Spleen (tissue), 13 donors: ENCODE measurements at regions of chr6 and their contacts with region 1.

Region 1: GRCh38 chr6:137641474-137642077 is 147.4 kb upstream of the OLIG3 start:
- DNase-seq: no peak
- H3K4me3 ChIP-seq: no peak overlapping the region
- H3K27ac ChIP-seq: no peak overlapping the region
- H3K4me1 ChIP-seq: peaks cover 0 to 14% (median 5%) of the 10 kb centered on the region in 6 donors
- H3K27me3 ChIP-seq: no peaks in the 10 kb centered on the region
- CTCF ChIP-seq: peak; percentile 24 to 78 (median 67)
- POLR2A ChIP-seq: no peak

Region 2: GRCh38 chr6:136969925-136970595 is 671.5 kb before region 1 on chr6:
- intact Hi-C with region 1: loop called (anchors 10 kb)
- DNase-seq: no peak
- H3K4me3 ChIP-seq: no peak overlapping the region
- H3K27ac ChIP-seq: no peak overlapping the region
- H3K4me1 ChIP-seq: peaks cover 0 to 8% (median 6%) of the 10 kb centered on the region in 6 donors
- H3K27me3 ChIP-seq: peaks cover 0 to 34% (median 0%) of the 10 kb centered on the region in 7 donors
- CTCF ChIP-seq: no peak
- POLR2A ChIP-seq: no peak

Region 3: DNA sequence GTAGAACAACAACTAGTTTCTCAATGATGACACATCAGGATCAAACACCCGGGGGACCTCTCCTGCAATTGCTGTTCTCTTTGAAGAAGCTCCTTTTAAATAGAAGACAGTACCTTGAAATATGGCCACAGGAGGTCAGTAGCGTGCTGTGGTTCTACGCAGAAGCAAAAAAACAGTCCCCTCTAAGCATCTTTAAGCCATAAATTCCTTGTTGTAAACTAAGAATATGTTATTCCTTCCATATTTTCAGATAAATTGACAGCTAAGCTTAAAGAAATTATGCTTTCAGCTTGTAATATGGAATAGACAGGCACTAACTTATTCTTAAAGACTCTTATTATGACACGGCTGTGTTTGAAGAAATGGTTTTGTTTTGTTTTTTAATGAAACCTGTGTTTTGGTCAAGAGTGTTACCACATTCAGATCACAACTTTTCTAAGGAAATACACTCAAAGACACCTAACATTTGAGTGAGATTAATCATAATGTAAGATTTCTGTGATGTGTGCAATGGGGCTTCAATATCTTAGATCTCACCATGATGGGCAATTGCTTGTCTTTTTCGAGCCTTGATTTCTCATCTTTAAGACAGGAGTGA is 547.1 kb before region 1 on chr6:
- intact Hi-C with region 1: loop called (anchors 5 kb)
- DNase-seq: no peak
- H3K4me3 ChIP-seq: peak overlapping the region in 1 of 8 donors; percentile 21
- H3K27ac ChIP-seq: peak overlapping the region in 4 of 8 donors; percentile 2 to 61 (median 38)
- H3K4me1 ChIP-seq: peaks cover 0 to 61% (median 21%) of the 10 kb centered on the region in 6 donors
- H3K27me3 ChIP-seq: no peaks in the 10 kb centered on the region
- CTCF ChIP-seq: peak; percentile 17 to 77 (median 68)
- POLR2A ChIP-seq: no peak

Region 4: GRCh38 chr6:137271245-137272183 is 370.1 kb before region 1 on chr6:
- intact Hi-C with region 1: loop called (anchors 5 kb)
- DNase-seq: no peak
- H3K4me3 ChIP-seq: no peak overlapping the region
- H3K27ac ChIP-seq: peak overlapping the region in 2 of 8 donors; percentile 14 to 27
- H3K4me1 ChIP-seq: peaks cover 0 to 27% (median 13%) of the 10 kb centered on the region in 6 donors
- H3K27me3 ChIP-seq: no peaks in the 10 kb centered on the region
- CTCF ChIP-seq: peak; percentile 75 to 91 (median 85)
- POLR2A ChIP-seq: no peak

Region 5: GRCh38 chr6:137332637-137333280 is 308.8 kb before region 1 on chr6:
- intact Hi-C with region 1: loop called (anchors 10 kb)
- DNase-seq: no peak
- H3K4me3 ChIP-seq: no peak overlapping the region
- H3K27ac ChIP-seq: no peak overlapping the region
- H3K4me1 ChIP-seq: no peaks in the 10 kb centered on the region
- H3K27me3 ChIP-seq: peaks cover 0 to 7% (median 0%) of the 10 kb centered on the region in 7 donors
- CTCF ChIP-seq: no peak
- POLR2A ChIP-seq: no peak

Region 6: DNA sequence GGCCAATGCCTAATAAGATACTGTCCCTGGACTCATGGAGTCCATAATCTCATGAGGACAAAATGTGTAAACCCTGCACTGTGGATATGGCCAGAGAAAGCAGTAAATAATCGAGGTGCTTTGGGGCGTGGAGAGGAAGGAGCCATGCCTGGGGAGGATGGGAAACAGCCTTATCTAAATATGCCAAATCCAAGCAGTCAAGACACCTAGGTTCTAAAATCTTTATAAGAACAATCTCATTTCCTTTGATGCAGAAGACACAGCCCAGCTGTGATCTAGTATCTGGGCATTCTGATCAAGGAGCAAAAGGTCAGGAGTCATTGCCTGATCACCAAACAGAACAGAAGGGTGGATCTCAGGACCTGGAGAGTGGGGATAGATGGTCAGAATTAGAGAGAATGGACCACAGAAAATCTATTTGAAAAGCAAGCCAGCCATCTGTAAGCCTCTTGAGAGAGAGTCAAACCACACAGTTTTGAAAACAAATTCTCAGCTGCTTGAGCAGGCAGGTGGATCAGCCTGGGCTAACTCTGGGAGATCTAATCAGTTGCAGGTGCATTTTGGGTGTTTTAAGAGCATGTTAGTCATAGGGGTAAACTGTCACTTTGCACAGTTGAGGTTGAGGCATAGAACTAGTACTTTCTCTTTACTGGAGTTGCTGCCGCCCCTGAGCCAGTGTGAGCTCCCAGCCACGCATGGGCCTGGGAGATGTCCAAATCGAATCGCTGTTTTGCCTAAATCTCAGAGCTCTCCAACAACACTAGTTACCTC is 94.7 kb after region 1 on chr6:
- intact Hi-C with region 1: no loop called
- DNase-seq: no peak
- H3K4me3 ChIP-seq: no peak overlapping the region
- H3K27ac ChIP-seq: peak overlapping the region in 1 of 8 donors; percentile 86
- H3K4me1 ChIP-seq: peaks cover 0 to 52% (median 8%) of the 10 kb centered on the region in 6 donors
- H3K27me3 ChIP-seq: no peaks in the 10 kb centered on the region
- CTCF ChIP-seq: no peak
- POLR2A ChIP-seq: no peak

Region 7: DNA sequence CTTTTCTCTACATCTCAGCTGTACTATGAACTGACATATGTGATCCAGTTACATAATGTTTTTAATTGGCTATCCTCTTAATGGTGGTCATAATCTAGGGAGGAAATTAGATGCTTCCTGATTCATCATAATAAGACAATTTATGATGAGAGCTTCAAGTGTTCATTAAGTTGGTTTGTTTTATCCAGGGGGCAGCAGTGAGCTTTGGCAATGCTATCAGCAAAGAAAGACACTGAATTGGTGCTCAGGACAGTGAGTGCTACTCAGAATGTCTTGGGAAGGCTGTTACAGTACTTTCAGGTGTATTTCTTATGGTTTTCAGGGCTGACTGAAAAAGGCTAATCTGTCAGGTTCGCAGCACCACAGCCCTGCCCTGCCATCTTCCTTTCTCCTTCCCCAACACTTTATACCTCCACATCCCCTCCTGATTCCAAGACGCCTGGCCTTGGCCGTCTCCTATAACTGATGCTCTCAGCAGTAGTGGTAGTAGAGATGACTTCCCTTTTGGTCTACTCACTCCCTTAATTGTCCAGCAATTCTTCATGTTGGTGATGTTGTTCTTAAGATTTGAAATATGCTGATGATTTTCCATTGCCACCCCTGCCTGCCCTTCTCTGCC is 158.5 kb after region 1 on chr6:
- intact Hi-C with region 1: no loop called
- DNase-seq: no peak
- H3K4me3 ChIP-seq: no peak overlapping the region
- H3K27ac ChIP-seq: no peak overlapping the region
- H3K4me1 ChIP-seq: peaks cover 0 to 34% (median 14%) of the 10 kb centered on the region in 6 donors
- H3K27me3 ChIP-seq: no peaks in the 10 kb centered on the region
- CTCF ChIP-seq: peak in 10 of 11 experiments; percentile 30 to 76 (median 64)
- POLR2A ChIP-seq: no peak